ENCODE measurements at regions of chr1 and their contacts with region 1.

Region 1: GRCh38 chr1:221203224-221204054 is 324.2 kb downstream of the HLX start:
- DNase-seq: peak; percentile 92
- H3K4me3 ChIP-seq: no peak overlapping the region
- H3K27ac ChIP-seq: no peak overlapping the region
- H3K4me1 ChIP-seq: peaks cover 0 to 12% (median 6%) of the 10 kb centered on the region in 6 donors
- H3K27me3 ChIP-seq: peaks cover 0 to 27% (median 0%) of the 10 kb centered on the region in 7 donors
- CTCF ChIP-seq: peak; percentile 49 to 93 (median 84)
- POLR2A ChIP-seq: no peak

Region 2: DNA sequence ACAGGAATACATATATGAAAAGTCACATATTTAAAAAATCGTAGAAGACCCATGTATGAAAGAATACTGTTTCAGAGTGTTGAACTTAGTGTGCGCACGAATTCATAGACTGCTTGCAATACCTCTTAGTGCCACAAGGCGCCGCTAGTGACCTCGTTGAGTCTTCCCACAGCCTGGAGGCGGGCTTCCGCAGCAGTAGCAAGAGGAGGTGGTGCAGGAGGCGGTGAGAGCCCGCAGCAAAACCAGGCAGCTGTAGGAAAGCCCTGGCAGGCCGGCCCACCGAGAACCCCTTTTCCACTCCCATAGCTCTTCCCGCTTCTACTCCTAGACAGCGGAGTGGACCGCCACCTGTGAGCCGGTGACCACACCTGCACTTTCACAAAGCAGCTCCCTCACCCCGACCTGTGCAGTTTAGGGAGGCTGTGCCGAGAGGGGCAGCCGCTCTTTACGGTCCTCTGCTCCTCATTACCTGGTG is 393.2 kb before region 1 on chr1:
- intact Hi-C with region 1: loop called (anchors 5 kb)
- DNase-seq: peak; percentile 94
- H3K4me3 ChIP-seq: peak overlapping the region in 2 of 8 donors; percentile 21 to 57
- H3K27ac ChIP-seq: no peak overlapping the region
- H3K4me1 ChIP-seq: peaks cover 0 to 16% (median 11%) of the 10 kb centered on the region in 6 donors
- H3K27me3 ChIP-seq: peaks cover 0 to 30% (median 0%) of the 10 kb centered on the region in 7 donors
- CTCF ChIP-seq: peak; percentile 70 to 95 (median 90)
- POLR2A ChIP-seq: no peak

Region 3: DNA sequence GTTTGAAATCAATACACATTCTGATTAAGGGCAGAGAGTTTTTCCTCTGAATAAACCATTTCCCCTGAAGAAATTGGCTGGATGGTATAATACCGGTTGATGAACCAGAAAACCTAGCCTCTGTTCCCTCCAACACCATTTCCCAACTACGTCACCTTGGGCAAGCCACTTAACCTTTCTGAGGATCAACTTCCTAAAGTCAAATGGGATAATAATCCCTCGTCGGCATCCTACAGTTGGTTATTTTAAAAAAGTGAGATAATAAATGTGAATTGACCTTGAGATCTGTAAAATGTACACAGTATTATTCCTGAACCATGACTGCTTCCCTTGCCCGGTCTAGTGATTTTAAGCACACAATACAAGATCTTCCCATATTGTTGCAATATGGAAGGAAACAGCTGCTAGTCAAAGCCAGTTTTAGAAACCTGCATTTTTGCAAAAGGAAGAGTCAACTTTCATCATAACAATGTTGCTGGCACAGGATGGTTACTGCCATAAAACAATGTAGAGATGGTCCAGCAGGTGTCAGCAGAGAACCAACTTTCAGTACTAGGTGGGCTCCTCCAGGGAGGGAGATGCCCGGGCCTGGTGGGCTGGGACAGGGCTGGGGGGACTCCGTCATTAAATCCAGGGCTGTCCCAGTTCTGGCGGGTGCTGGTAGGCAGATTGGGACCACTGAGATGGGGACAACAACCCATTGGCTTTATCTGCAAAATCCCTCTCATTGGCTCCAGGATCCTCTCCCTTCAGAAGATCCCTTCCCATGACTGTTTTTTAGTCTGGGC is 329.4 kb before region 1 on chr1:
- intact Hi-C with region 1: loop called (anchors 5 kb)
- DNase-seq: peak; percentile 78
- H3K4me3 ChIP-seq: no peak overlapping the region
- H3K27ac ChIP-seq: peak overlapping the region in 3 of 8 donors; percentile 10 to 41 (median 26)
- H3K4me1 ChIP-seq: peaks cover 19 to 61% (median 39%) of the 10 kb centered on the region in 6 donors
- H3K27me3 ChIP-seq: peaks cover 0 to 49% (median 0%) of the 10 kb centered on the region in 7 donors
- CTCF ChIP-seq: peak; percentile 52 to 85 (median 72)
- POLR2A ChIP-seq: no peak

Region 4: DNA sequence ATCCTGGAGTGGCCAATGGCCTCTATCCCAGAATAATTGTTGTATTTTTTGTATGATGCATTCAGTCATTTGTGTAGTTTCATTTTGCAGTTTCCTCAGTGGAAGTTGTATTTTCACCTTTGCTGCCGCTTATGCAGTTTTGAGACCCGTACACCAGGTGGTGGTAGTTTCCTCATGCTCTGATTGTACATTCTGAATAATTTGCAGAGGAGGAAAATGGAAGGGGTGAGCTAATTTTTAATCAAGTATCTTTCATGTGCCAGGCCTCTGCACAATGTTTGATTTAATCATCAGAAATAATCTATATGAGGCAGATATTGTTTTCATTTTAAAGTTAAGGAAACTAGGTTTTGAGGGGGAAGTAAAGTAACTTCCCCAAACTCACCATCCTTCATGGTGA is 294.7 kb before region 1 on chr1:
- intact Hi-C with region 1: loop called (anchors 10 kb)
- DNase-seq: no peak
- H3K4me3 ChIP-seq: no peak overlapping the region
- H3K27ac ChIP-seq: no peak overlapping the region
- H3K4me1 ChIP-seq: peaks cover 0 to 9% (median 3%) of the 10 kb centered on the region in 6 donors
- H3K27me3 ChIP-seq: peaks cover 0 to 5% (median 0%) of the 10 kb centered on the region in 7 donors
- CTCF ChIP-seq: peak; percentile 22 to 68 (median 57)
- POLR2A ChIP-seq: no peak